Common myeloid progenitor, CD34-positive (primary cell): ENCODE measurements at regions of chr14 and their contacts with region 1.

Region 1: GRCh38 chr14:90903101-90903500 is 86.9 kb upstream of the TTC7B start:
- DNase-seq: peak; percentile 57 to 79 (median 73)
- H3K4me3 ChIP-seq: no peak overlapping the region
- H3K27ac ChIP-seq: no peak overlapping the region
- H3K4me1 ChIP-seq: no peaks in the 10 kb centered on the region
- H3K27me3 ChIP-seq: no peaks in the 10 kb centered on the region

Region 2: DNA sequence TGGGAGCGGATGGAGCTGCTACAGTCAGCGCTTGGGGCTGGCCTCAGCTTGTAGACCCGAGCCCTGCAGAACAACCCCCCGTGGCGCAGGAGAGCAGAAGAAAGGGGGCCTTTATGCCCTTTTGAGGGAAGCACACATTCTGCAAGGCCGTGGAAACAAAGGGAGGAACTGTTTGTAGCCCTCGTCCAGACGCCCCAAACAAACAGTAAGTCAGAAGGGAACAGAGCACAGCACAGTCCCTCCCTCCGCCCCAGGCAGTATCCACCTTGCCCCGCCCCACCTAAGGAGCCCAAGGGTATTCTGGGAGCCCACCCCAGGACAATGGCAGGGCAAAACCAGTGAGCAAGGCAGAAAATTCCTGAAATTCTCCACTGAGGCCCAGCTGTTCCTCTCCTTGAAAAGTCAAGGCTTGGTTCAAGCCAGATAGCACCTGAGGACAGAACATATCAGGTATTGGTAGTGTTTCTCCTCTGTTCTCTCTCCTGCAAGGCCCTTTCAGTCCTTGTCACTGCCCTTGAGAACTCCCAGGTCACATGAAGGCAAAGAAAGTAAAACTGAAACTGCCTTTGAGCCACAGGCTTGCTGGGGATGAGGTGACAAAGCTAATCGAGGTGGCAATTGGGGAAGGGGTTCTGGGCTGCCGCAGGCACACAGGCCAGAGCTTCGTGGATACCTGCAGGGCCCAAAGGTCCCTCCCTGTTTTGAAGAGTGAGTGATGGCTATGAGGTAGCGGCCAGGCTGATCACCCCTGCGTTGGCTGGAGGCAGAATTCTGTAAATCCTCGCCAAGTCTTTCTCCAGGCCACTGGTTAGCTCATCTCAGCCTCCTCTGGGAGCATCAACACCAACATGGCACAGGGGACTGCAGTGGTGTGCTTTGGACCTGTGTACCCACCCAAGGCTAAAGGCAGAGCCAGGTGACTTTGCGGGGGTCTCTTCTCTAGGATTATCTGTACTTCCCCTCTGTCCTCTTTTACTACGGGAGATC is 211.3 kb after region 1 on chr14:
- CTCF ChIA-PET with region 1: interaction called, 17 read pairs
- POLR2A ChIA-PET with region 1: no interaction called
- DNase-seq: peak; percentile 85 to 96 (median 94)
- H3K4me3 ChIP-seq: peak overlapping the region; percentile 32 to 94 (median 83)
- H3K27ac ChIP-seq: peak overlapping the region; percentile 90 to 95
- H3K4me1 ChIP-seq: peaks cover 19 to 59% (median 52%) of the 10 kb centered on the region in 4 experiments
- H3K27me3 ChIP-seq: no peaks in the 10 kb centered on the region

Region 3: DNA sequence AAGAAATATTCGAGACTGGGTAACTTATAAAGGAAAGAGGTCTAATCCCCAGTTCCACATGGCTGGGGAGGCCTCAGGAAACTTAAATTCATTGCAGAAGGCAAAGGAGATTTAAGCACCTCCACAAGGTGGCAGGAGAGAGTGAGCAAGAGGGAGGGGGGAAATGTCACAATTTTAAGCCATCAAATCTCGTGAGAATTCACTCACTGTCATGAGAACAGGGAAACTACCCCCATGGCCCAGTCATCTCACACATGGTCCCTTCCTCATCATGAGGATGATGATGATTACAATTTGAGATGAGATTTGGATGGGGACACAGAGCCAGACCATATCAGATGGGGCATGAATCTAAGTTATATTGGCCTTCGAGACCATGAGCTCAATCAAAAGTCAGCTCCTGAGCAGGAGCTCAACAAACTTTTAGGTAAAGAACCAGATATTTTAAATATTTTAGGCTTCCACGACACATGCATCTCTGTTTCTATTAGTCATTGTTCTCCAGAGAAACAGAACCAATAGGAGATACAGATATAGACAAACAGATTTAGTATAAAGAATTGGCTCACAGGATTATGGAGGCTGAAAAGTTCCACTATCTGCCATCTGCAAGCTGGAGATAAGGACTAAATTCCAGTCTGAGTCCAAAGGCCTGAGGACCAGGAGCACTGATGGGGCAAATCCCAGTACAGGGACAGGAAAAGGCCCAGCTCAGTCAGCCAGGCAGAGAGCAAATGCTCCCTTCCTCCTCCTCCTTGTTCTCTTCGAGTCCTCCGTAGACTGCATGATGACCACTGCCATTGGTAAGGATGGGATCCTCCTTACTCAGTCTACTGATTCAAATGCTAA is 235.6 kb after region 1 on chr14:
- CTCF ChIA-PET with region 1: interaction called, 13 read pairs
- POLR2A ChIA-PET with region 1: no interaction called
- DNase-seq: peak; percentile 74 to 86 (median 81)
- H3K4me3 ChIP-seq: no peak overlapping the region
- H3K27ac ChIP-seq: no peak overlapping the region
- H3K4me1 ChIP-seq: peaks cover 6 to 27% (median 21%) of the 10 kb centered on the region in 4 experiments
- H3K27me3 ChIP-seq: no peaks in the 10 kb centered on the region

Region 4: GRCh38 chr14:91164685-91165084 is 261.6 kb after region 1 on chr14:
- CTCF ChIA-PET with region 1: interaction called, 29 read pairs
- POLR2A ChIA-PET with region 1: no interaction called
- DNase-seq: no peak
- H3K4me3 ChIP-seq: no peak overlapping the region
- H3K27ac ChIP-seq: no peak overlapping the region
- H3K4me1 ChIP-seq: no peaks in the 10 kb centered on the region
- H3K27me3 ChIP-seq: no peaks in the 10 kb centered on the region

Region 5: DNA sequence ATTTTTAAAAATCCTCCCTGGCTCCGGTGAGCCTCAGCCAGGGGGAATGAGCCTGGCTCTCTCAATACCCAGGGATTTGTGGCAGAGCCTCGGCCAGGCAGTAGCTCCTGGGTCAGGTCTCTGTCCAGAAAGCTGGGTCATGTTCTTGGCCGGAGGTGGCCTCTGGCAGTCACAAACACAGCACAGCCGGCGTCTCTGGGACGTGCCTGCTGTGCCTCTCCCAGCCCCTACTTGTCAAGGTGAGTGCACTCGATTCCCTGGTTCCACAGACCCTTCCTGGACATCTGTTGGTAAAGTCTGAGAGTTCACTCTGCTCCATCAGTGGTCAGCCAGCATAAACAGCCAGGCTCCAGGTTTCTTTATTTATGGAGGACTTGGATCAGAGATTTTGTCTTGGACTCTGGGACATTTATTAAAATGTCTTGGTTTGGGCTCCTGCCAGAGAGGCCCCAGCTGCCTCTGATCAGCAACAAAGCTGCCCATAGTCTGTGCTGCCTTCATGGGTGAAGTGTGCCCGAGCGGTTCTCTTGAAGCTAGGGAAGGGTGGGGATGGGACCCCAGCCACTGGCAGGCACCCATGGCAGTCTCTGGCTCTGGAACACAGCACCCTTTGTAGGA is 267.5 kb after region 1 on chr14:
- CTCF ChIA-PET with region 1: interaction called, 118 read pairs
- POLR2A ChIA-PET with region 1: interaction called, 3 read pairs
- DNase-seq: no peak
- H3K4me3 ChIP-seq: no peak overlapping the region
- H3K27ac ChIP-seq: no peak overlapping the region
- H3K4me1 ChIP-seq: no peaks in the 10 kb centered on the region
- H3K27me3 ChIP-seq: no peaks in the 10 kb centered on the region